Activated B cell treated with CpG ODN at 0.5 μM for 24 hours (primary cell): ENCODE measurements at regions of chr15 and their contacts with region 1.

Region 1: DNA sequence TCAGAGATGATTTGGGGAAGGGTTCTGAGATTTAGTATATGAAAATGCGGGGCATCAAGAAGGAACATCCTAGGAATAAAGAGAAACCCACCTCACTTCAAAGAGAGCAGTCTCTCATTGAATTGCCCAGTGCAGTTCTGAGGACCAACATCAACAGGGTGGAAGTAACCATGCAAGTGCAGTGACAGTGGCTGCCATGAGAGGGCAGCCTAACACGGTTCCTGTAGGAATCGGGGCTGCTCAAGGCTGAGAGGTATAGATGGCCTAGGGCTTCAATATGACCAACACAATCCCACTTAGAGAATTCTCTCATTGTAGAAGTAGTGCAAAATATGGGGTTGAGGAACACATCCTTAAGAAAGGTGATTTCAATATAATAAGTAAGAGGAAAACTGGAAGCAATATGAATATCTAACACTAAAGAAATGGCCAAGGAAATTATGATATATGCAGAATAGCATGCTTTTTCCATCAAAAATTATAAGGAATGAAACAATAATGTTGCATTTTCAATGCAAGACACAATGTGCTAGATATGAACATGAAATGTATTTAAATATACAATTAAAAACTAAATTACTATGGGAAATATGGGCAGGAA is 51.1 kb upstream of the ARRDC4 start:
- DNase-seq: peak; percentile 36
- ATAC-seq: peak; percentile 71
- H3K4me3 Mint-ChIP-seq: no peak overlapping the region
- H3K27ac Mint-ChIP-seq: no peak overlapping the region
- H3K4me1 Mint-ChIP-seq: no peaks in the 10 kb centered on the region
- H3K27me3 Mint-ChIP-seq: peaks cover 8% of the 10 kb centered on the region
- CTCF ChIP-seq: no peak

Region 2: DNA sequence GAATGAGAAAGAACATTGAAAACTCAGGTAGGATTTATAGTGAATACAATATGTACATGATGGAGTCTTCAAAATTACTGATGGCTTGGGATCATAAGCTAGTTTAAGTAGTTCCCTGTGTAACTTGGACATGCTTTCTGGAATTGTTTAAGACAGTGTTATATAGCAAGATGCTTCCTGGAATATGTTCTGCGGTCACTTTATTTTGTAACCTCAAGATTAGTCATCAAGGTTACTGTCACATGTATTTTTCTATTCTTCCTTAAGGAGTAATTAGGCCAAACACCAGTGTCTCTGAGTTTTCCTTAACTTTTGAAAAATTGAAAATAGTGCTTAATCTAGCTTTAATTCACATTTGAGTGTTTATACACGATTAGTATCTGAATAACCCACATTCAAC is 709.2 kb before region 1 on chr15:
- CTCF ChIA-PET with region 1: no interaction called
- POLR2A ChIA-PET with region 1: no interaction called
- intact Hi-C with region 1: no loop called
- DNase-seq: no peak
- ATAC-seq: no peak
- H3K4me3 Mint-ChIP-seq: no peak overlapping the region
- H3K27ac Mint-ChIP-seq: no peak overlapping the region
- H3K4me1 Mint-ChIP-seq: no peaks in the 10 kb centered on the region
- H3K27me3 Mint-ChIP-seq: no peaks in the 10 kb centered on the region
- CTCF ChIP-seq: no peak

Region 3: GRCh38 chr15:97929456-97929855 is 20.1 kb after region 1 on chr15:
- CTCF ChIA-PET with region 1: no interaction called
- POLR2A ChIA-PET with region 1: no interaction called
- intact Hi-C with region 1: no loop called
- DNase-seq: no peak
- ATAC-seq: no peak
- H3K4me3 Mint-ChIP-seq: no peak overlapping the region
- H3K27ac Mint-ChIP-seq: no peak overlapping the region
- H3K4me1 Mint-ChIP-seq: no peaks in the 10 kb centered on the region
- H3K27me3 Mint-ChIP-seq: no peaks in the 10 kb centered on the region
- CTCF ChIP-seq: no peak

Region 4: DNA sequence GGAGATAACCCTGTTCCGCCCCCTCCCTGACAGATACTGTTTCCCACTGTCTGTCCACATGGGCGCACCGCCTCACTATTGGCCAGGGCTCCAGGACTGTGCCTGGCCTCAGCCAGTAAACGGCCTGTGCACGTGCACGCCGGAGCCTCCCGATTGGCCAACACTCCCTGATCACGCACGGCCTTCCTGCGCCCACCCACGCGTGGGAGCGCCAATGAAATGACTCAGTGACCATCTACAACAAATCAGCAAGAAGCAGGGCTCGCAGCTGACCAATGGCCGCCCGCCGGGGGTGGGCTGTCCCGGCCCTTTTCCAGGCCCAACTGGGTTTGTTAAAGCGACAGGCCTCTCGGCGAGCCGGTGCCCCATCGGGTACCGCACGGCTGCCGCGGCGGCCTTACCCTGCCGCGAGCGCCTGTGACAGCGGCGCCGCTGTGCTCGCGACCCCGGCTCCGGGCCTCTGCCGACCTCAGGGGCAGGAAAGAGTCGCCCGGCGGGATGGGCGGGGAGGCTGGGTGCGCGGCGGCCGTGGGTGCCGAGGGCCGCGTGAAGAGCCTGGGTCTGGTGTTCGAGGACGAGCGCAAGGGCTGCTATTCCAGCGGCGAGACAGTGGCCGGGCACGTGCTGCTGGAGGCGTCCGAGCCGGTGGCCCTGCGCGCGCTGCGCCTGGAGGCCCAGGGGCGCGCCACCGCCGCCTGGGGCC is 51.1 kb after region 1 on chr15 and contains the start of gene ARRDC4:
- CTCF ChIA-PET with region 1: no interaction called
- POLR2A ChIA-PET with region 1: no interaction called
- intact Hi-C with region 1: loop called (anchors 1 kb)
- DNase-seq: peak; percentile 88
- ATAC-seq: peak; percentile 94
- H3K4me3 Mint-ChIP-seq: peak within 1 kb of the TSS; percentile 80
- H3K27ac Mint-ChIP-seq: peak within 1 kb of the TSS; percentile 81
- H3K4me1 Mint-ChIP-seq: peaks cover 26% of the 10 kb centered on the region
- H3K27me3 Mint-ChIP-seq: peaks cover 3% of the 10 kb centered on the region
- CTCF ChIP-seq: no peak
- total RNA-seq, gene ARRDC4: 1.8 and 2.0 TPM in 2 replicates

Region 5: DNA sequence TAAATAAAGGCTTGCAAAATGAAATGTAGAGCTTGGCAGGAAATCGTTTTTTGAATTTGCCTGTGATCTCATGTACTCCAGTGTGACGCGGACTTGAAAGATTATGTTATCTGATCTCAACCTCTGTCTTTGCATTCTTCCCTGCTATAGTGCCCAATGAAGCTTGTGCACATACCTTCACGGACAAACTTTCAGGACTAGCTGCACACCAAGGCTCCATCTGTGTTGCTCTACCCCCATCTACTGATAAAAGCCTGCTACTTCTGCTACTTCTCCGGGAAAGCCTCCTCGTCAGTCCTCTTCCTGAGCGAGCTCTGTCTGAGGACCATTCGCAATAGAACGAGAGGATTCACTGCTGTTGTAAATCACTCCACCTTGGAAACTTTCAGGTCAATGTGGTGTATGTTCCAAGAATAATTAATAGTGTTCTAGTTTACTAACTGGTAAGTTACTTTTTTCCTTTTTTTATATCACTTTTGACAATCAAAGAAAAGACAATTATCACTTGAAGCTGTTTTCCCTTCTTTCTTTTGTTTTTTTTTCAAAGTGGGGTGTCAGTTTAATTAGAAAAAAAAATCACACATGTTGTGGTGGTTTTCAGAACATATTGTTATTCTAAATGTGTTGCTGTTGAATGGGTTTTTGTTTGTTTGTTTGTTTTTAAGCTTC is 268.7 kb after region 1 on chr15:
- CTCF ChIA-PET with region 1: interaction called, 8 read pairs
- POLR2A ChIA-PET with region 1: no interaction called
- intact Hi-C with region 1: loop called (anchors 1 kb)
- DNase-seq: no peak
- ATAC-seq: peak; percentile 21
- H3K4me3 Mint-ChIP-seq: no peak overlapping the region
- H3K27ac Mint-ChIP-seq: no peak overlapping the region
- H3K4me1 Mint-ChIP-seq: no peaks in the 10 kb centered on the region
- H3K27me3 Mint-ChIP-seq: peaks cover 6% of the 10 kb centered on the region
- CTCF ChIP-seq: no peak

Region 6: DNA sequence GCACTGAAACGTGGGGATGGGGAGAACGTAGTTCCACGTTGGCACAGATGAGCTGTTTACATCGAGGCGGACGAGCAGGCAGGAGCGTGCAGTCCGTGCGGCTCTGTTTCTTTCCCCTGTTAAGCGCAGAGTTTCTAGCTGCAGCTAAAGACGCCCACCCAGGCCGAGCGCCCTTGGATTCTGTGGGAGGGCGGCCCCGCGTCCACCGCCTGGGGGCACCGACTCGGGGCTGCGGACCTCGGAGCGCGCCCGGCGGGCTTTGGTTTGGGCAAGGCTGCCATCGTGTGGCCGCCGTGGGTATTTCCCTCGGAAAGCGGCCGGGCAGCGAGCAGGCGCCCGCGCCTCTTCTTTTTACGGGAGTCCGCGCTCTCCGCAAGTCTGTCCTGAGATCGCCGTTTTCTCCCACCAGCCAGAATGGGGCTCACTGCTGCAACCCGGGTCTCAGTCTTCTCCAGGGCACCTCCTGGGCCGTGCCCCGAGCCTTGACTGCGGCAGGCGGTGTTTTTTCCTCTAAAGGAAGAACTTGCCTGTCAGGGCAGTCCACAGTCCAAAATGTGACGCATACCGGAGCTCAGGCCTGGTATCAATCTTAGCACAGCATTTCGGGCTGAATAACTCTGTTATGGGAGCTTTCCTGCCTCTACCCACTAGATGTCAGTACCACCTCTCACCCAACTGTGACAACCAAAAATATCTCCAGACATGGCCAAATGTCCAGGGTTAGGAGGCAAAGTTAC is 519.0 kb after region 1 on chr15:
- CTCF ChIA-PET with region 1: no interaction called
- POLR2A ChIA-PET with region 1: no interaction called
- intact Hi-C with region 1: loop called (anchors 5 kb)
- DNase-seq: peak; percentile 60
- ATAC-seq: peak; percentile 66
- H3K4me3 Mint-ChIP-seq: peak overlapping the region; percentile 50
- H3K27ac Mint-ChIP-seq: no peak overlapping the region
- H3K4me1 Mint-ChIP-seq: peaks cover 3% of the 10 kb centered on the region
- H3K27me3 Mint-ChIP-seq: peaks cover 37% of the 10 kb centered on the region
- CTCF ChIP-seq: peak; percentile 42